Transverse colon (tissue), 4 donors: ENCODE measurements at regions of chr2 and their contacts with region 1.

Region 1: DNA sequence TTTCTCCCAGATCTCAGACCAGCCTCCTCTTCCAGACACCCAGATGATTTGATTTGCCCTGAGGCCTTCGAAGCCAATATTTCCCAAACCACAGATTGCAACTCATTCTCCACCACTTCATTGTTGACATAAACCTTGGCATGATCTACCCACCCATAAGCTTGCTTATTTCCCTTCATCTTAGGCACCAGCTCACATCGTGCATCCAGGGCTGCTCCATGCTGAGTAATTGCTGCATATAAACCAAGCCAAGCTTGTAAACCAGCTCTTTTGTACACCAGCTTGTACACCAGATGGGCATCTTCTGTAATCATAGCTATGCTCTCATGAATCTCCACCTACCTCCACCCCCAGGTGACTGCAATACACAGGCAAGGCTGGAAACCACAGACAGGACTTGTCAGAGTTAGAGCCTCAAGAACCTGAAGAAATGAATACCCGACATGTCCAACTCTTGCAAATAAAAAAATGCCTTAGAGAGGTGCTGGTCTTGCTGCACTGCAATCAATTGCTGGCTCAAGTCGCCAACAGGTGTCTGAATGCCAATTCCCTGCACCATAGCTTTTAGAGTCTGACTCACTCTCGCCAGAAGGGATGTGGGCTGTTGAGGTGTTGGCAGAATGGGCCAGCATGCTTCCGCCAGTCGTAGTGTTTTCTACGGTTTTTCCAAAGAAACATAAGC is 31.5 kb downstream of the TRABD2A start:
- DNase-seq: no peak
- H3K4me3 ChIP-seq: no peak overlapping the region
- H3K27ac ChIP-seq: peak overlapping the region in 2 of 4 donors; percentile 1 to 24
- H3K4me1 ChIP-seq: peaks cover 0 to 17% (median 8%) of the 10 kb centered on the region in 4 donors
- H3K27me3 ChIP-seq: no peaks in the 10 kb centered on the region
- CTCF ChIP-seq: no peak
- EP300 ChIP-seq: no peak
- POLR2A ChIP-seq: no peak

Region 2: GRCh38 chr2:84704505-84705244 is 144.7 kb before region 1 on chr2:
- in situ Hi-C with region 1: no loop called
- intact Hi-C with region 1: no loop called
- DNase-seq: peak; percentile 26
- H3K4me3 ChIP-seq: no peak overlapping the region
- H3K27ac ChIP-seq: peak overlapping the region; percentile 30 to 53 (median 40)
- H3K4me1 ChIP-seq: peaks cover 0 to 17% (median 4%) of the 10 kb centered on the region in 4 donors
- H3K27me3 ChIP-seq: no peaks in the 10 kb centered on the region
- CTCF ChIP-seq: no peak
- EP300 ChIP-seq: no peak
- POLR2A ChIP-seq: no peak

Region 3: DNA sequence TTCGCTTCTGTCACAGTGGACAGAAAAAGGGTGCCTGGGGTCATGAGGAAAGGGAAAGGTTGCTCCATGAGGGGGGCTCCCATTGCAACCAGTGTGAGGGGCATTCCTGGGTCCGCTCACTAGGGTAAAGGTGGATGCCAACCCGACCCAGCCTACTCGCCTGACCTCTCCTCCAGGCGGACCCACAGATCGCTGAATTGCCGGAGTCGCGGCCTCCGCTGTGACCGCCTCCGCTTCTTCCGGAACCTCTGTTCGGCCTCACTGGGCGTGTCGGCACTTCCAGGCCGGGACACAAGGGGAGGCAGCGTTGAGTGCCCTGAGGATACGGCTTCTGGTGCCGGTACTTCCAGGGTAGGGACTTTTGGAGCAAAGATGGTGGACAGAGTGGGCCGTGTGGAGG is 25.6 kb before region 1 on chr2:
- in situ Hi-C with region 1: no loop called
- intact Hi-C with region 1: loop called (anchors 1 kb)
- DNase-seq: no peak
- H3K4me3 ChIP-seq: no peak overlapping the region
- H3K27ac ChIP-seq: no peak overlapping the region
- H3K4me1 ChIP-seq: no peaks in the 10 kb centered on the region
- H3K27me3 ChIP-seq: no peaks in the 10 kb centered on the region
- CTCF ChIP-seq: no peak
- EP300 ChIP-seq: no peak
- POLR2A ChIP-seq: no peak